MCF 10A (cell line): ENCODE measurements at regions of chr6 and their contacts with region 1.

Region 1: GRCh38 chr6:140774080-140774505 is 1358.6 kb upstream of the GJE1 start:
- DNase-seq: peak; percentile 60
- H3K4me3 Mint-ChIP-seq: no peak overlapping the region
- H3K27ac Mint-ChIP-seq: no peak overlapping the region
- H3K4me1 Mint-ChIP-seq: peaks cover 8% of the 10 kb centered on the region
- H3K27me3 Mint-ChIP-seq: no peaks in the 10 kb centered on the region
- CTCF ChIP-seq: no peak

Region 2: DNA sequence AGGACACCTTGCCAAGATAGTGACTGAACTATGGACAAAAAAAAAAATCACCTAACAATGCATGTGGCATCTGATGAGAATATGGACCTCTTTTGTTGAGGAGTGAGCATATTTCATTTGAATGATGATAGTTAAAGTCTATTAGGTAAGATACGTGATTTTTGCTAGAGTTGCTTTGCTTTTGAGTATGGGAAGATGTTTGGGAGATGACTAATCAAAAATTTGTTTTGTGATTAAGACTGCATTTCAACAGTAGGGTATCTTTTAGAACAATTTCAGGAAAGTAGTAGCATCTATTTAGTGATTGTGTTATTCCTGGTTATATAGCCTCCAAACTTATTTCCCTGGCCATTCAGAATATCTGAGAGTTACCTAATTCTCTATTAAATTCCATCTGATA is 521.0 kb before region 1 on chr6:
- CTCF ChIA-PET with region 1: no interaction called
- POLR2A ChIA-PET with region 1: no interaction called
- intact Hi-C with region 1: no loop called
- DNase-seq: peak; percentile 3
- H3K4me3 Mint-ChIP-seq: no peak overlapping the region
- H3K27ac Mint-ChIP-seq: no peak overlapping the region
- H3K4me1 Mint-ChIP-seq: peaks cover 2% of the 10 kb centered on the region
- H3K27me3 Mint-ChIP-seq: no peaks in the 10 kb centered on the region
- CTCF ChIP-seq: no peak

Region 3: DNA sequence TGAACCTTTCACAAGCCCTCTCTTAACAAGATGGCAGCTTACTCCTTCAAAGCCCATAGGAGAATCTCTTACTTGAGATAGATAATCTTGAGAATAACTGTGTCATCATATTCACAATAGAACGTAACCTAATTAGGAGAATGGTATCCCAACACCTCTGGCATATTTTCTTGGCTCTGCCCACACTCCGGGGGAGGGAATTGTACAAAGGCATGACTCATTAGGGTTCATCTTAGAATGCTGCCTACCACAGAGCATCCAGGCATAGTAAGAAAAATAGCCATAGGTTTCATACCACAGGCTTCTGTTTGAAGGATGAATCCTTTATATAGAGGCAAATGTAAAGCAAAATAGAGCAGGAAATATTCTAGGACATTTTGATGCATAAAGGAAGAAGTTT is 299.0 kb before region 1 on chr6:
- CTCF ChIA-PET with region 1: no interaction called
- POLR2A ChIA-PET with region 1: no interaction called
- intact Hi-C with region 1: loop called (anchors 10 kb)
- DNase-seq: peak; percentile 53
- H3K4me3 Mint-ChIP-seq: no peak overlapping the region
- H3K27ac Mint-ChIP-seq: peak overlapping the region; percentile 27
- H3K4me1 Mint-ChIP-seq: no peaks in the 10 kb centered on the region
- H3K27me3 Mint-ChIP-seq: no peaks in the 10 kb centered on the region
- CTCF ChIP-seq: no peak

Region 4: GRCh38 chr6:140636908-140637402 is 137.1 kb before region 1 on chr6:
- CTCF ChIA-PET with region 1: no interaction called
- POLR2A ChIA-PET with region 1: no interaction called
- intact Hi-C with region 1: no loop called
- DNase-seq: no peak
- H3K4me3 Mint-ChIP-seq: no peak overlapping the region
- H3K27ac Mint-ChIP-seq: no peak overlapping the region
- H3K4me1 Mint-ChIP-seq: no peaks in the 10 kb centered on the region
- H3K27me3 Mint-ChIP-seq: no peaks in the 10 kb centered on the region
- CTCF ChIP-seq: no peak

Region 5: GRCh38 chr6:140789466-140789865 is 15.4 kb after region 1 on chr6:
- CTCF ChIA-PET with region 1: no interaction called
- POLR2A ChIA-PET with region 1: no interaction called
- intact Hi-C with region 1: no loop called
- DNase-seq: no peak
- H3K4me3 Mint-ChIP-seq: no peak overlapping the region
- H3K27ac Mint-ChIP-seq: no peak overlapping the region
- H3K4me1 Mint-ChIP-seq: peaks cover 4% of the 10 kb centered on the region
- H3K27me3 Mint-ChIP-seq: no peaks in the 10 kb centered on the region
- CTCF ChIP-seq: no peak